Activated CD4-positive, alpha-beta T cell treated with anti-CD3 and anti-CD28 coated beads for 36 hours (primary cell): ENCODE measurements at regions of chr11 and their contacts with region 1.

Region 1: GRCh38 chr11:17207317-17208258 is at the start of gene PIK3C2A:
- DNase-seq: peak; percentile 97
- ATAC-seq: peak; percentile 97
- H3K4me3 Mint-ChIP-seq: peak within 1 kb of the TSS; percentile 91
- H3K27ac Mint-ChIP-seq: peak within 1 kb of the TSS; percentile 97
- H3K4me1 Mint-ChIP-seq: peaks cover 40% of the 10 kb centered on the region
- H3K27me3 Mint-ChIP-seq: no peaks in the 10 kb centered on the region
- total RNA-seq, gene PIK3C2A: 23.3 to 27.3 TPM

Region 2: GRCh38 chr11:16738193-16738946 is 469.2 kb before region 1 on chr11 and contains the start of gene C11orf58:
- CTCF ChIA-PET with region 1: no interaction called
- POLR2A ChIA-PET with region 1: no interaction called
- intact Hi-C with region 1: loop called in 1 of 2 experiments (anchors 2 kb)
- DNase-seq: peak; percentile 96
- ATAC-seq: peak; percentile 97
- H3K4me3 Mint-ChIP-seq: no peak within 1 kb of the TSS
- H3K27ac Mint-ChIP-seq: peak within 1 kb of the TSS; percentile 92
- H3K4me1 Mint-ChIP-seq: peaks cover 23% of the 10 kb centered on the region
- H3K27me3 Mint-ChIP-seq: no peaks in the 10 kb centered on the region
- total RNA-seq, gene C11orf58: 142 to 193 TPM

Region 3: DNA sequence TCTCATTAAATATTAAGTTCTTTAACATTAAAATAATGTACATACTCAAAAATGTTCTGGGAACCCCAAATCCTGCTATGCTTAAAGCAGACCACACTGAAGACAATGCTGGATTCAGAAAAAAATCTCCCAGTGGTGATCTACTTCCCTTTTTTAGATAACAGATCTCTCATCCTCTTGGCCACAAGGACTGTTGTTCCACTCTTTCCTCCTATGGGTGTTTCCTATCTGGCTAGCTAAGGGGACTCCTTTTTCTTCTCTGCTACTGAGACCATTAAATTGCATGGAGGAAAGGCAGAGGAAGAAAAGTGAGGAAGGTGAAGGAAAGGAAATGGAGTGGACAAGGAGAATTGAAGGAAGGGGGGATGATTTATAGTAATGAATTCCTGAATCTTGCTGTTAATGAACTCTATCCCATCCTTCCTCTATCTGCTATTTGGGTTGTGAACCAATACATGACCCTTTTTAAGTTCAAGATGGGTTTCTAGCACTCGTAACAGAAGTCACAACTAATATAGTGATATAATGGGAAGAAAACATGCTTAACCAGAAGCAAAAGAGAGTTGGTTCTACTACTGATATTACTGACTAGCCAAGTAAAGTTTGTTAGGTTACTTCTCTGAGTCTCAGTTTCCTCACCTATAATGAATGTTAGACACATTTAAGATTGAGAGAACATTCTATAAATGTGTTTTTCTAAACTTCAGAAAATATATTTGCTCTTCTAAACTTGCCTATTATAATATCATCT is 53.0 kb before region 1 on chr11:
- CTCF ChIA-PET with region 1: no interaction called
- POLR2A ChIA-PET with region 1: no interaction called
- intact Hi-C with region 1: no loop called
- DNase-seq: no peak
- ATAC-seq: no peak
- H3K4me3 Mint-ChIP-seq: no peak overlapping the region
- H3K27ac Mint-ChIP-seq: no peak overlapping the region
- H3K4me1 Mint-ChIP-seq: peaks cover 11% of the 10 kb centered on the region
- H3K27me3 Mint-ChIP-seq: no peaks in the 10 kb centered on the region

Region 4: DNA sequence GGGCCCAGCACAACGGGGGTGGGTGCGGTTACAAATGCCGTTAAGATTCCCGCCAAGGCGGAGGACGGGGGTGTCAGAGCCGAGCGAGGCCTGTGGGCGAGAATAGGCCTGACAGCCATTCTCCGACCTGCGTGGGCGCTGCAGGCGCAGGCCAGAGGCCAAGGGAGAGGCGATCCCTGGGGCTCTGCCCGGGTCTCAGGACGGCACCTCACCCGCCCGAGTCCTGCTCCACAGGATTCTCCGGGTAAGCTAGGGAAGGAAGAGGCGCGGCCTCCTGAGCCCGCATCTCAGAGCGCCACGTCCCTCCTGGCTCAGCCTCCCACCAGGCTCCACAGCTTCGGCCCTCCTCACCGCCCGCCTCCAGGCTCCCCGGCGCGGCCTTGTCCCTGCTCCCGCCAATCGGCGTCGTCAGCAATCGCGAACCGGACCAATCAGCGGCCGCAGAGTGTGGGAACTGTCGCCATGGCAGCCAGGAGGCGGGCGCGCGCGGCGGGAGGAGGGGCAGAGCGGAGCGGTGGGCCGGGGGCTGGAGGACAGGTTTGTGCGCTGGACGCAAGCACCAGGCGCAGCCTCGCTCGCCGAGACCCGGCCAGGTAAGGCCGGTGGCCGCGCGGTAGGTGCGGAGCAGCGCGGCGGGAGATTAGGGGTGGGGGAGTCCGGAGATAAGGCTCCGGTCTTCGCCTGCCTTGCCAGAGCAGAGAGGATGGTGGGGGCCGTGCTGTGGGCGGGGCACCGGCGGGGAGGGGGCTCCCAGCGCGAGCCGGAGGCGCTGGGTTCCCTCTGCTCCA is 68.8 kb after region 1 on chr11 and contains the start of gene NUCB2:
- CTCF ChIA-PET with region 1: interaction called, 4 read pairs
- POLR2A ChIA-PET with region 1: interaction called, 4 read pairs
- intact Hi-C with region 1: loop called (anchors 1 to 2 kb)
- DNase-seq: peak; percentile 99
- ATAC-seq: peak; percentile 92
- H3K4me3 Mint-ChIP-seq: peak within 1 kb of the TSS; percentile 75
- H3K27ac Mint-ChIP-seq: peak within 1 kb of the TSS; percentile 96
- H3K4me1 Mint-ChIP-seq: peaks cover 36% of the 10 kb centered on the region
- H3K27me3 Mint-ChIP-seq: no peaks in the 10 kb centered on the region
- total RNA-seq, gene NUCB2: 45.0 to 59.9 TPM

Region 5: GRCh38 chr11:17298302-17298701 is 90.7 kb after region 1 on chr11:
- CTCF ChIA-PET with region 1: interaction called, 3 read pairs
- POLR2A ChIA-PET with region 1: no interaction called
- intact Hi-C with region 1: loop called in 1 of 2 experiments (anchors 1 kb)
- DNase-seq: peak; percentile 83
- ATAC-seq: peak; percentile 82
- H3K4me3 Mint-ChIP-seq: no peak overlapping the region
- H3K27ac Mint-ChIP-seq: no peak overlapping the region
- H3K4me1 Mint-ChIP-seq: peaks cover 40% of the 10 kb centered on the region
- H3K27me3 Mint-ChIP-seq: no peaks in the 10 kb centered on the region

Region 6: GRCh38 chr11:17389211-17389956 is 181.8 kb after region 1 on chr11:
- CTCF ChIA-PET with region 1: interaction called, 7 read pairs
- POLR2A ChIA-PET with region 1: no interaction called
- intact Hi-C with region 1: loop called in 1 of 2 experiments (anchors 1 kb)
- DNase-seq: peak; percentile 86
- ATAC-seq: peak; percentile 82
- H3K4me3 Mint-ChIP-seq: peak overlapping the region; percentile 66
- H3K27ac Mint-ChIP-seq: no peak overlapping the region
- H3K4me1 Mint-ChIP-seq: peaks cover 3% of the 10 kb centered on the region
- H3K27me3 Mint-ChIP-seq: peaks cover 8% of the 10 kb centered on the region